A673 (cell line): ENCODE measurements at regions of chr17 and their contacts with region 1.

Region 1: GRCh38 chr17:28041068-28041843 is 1.2 kb upstream of the NLK start:
- DNase-seq: peak; percentile 100
- H3K4me3 ChIP-seq: peak overlapping the region; percentile 73
- H3K27ac ChIP-seq: peak overlapping the region; percentile 77
- H3K4me1 ChIP-seq: peaks cover 22% of the 10 kb centered on the region
- H3K27me3 ChIP-seq: no peaks in the 10 kb centered on the region
- CTCF ChIP-seq: no peak

Region 2: GRCh38 chr17:28086519-28086918 is 45.3 kb after region 1 on chr17:
- CTCF ChIA-PET with region 1: no interaction called
- POLR2A ChIA-PET with region 1: no interaction called
- intact Hi-C with region 1: loop called (anchors 5 kb)
- DNase-seq: peak; percentile 14
- H3K4me3 ChIP-seq: no peak overlapping the region
- H3K27ac ChIP-seq: no peak overlapping the region
- H3K4me1 ChIP-seq: peaks cover 10% of the 10 kb centered on the region
- H3K27me3 ChIP-seq: no peaks in the 10 kb centered on the region
- CTCF ChIP-seq: no peak

Region 3: DNA sequence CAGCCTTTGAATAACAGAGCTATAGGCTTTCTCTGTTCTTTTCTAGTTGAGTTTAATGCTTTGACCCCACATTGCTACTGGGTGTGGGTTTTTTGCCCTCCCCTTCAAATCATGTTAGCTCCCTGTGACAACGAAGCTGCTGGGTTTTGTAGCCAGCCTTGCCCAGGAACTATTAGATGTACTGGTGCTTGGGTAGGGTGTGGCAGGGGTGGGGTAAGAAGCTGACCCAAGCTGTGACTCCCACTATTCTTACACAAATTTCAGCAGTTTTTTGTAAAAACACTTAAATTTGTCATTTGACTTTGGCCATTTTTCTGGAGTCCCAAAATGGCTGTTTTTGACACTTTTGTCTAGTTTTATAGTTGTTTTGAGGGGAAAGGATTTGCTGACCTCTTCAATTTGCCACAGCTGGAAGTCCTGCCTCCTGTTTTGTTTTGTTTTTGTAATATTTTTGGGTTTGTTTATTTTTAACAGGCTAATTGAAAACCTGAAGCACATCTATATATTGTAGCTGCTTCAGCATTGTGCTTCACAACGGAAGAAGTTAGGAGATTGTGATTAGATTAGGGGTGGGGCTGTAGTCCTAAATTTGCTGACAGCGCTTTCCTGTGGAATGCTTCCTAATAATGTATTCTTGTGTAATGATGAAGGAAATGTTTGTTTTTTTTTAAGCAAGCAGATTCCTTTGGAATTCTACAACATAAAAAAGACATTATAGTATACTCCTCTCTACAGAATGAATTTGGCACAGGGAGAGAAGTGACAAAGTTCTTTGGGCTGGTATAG is 71.2 kb after region 1 on chr17:
- CTCF ChIA-PET with region 1: no interaction called
- POLR2A ChIA-PET with region 1: no interaction called
- intact Hi-C with region 1: loop called (anchors 10 kb)
- DNase-seq: peak; percentile 51
- H3K4me3 ChIP-seq: no peak overlapping the region
- H3K27ac ChIP-seq: no peak overlapping the region
- H3K4me1 ChIP-seq: peaks cover 16% of the 10 kb centered on the region
- H3K27me3 ChIP-seq: no peaks in the 10 kb centered on the region
- CTCF ChIP-seq: no peak